A673 (cell line): ENCODE measurements at regions of chr11 and their contacts with region 1.

Region 1: GRCh38 chr11:111601979-111602864 is at the start of gene SIK2:
- DNase-seq: peak; percentile 99
- H3K4me3 ChIP-seq: peak within 1 kb of the TSS; percentile 75
- H3K27ac ChIP-seq: peak within 1 kb of the TSS; percentile 93
- H3K4me1 ChIP-seq: peaks cover 39% of the 10 kb centered on the region
- H3K27me3 ChIP-seq: no peaks in the 10 kb centered on the region
- CTCF ChIP-seq: peak; percentile 91
- total RNA-seq, gene SIK2: 18.7 and 21.5 TPM in 2 replicates

Region 2: DNA sequence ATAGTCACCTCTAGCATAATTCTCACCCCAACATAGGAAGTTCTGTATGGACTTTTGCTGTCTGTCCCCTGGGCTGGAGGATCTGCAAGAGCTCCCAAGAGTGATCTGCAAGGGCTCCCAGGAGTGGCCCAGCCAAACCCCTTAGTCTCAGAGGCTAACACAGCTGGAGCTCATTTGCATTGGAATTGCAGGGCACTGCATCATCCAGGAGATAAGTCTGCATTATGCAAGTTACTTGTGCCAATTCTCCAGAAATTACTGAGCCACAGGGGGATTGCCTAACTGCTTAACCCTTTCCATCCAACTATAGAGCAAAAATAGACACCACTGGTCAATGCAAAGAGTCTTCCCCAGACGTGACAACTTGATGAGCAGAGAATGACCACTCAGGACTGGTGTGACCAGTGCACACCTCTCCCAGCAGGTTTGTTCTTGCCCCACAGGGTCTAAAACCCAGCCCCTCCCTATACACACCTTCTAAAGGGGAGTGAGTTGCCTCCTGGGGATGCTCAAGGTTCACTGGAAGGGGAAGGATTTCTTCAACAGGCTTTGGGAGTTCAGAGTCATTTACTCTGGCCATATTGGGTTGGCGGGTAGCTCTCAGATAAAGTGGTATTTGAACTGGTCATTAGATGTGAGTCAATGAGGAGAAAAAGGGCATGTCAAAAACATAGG is 265.5 kb before region 1 on chr11:
- CTCF ChIA-PET with region 1: no interaction called
- POLR2A ChIA-PET with region 1: no interaction called
- intact Hi-C with region 1: no loop called
- DNase-seq: peak; percentile 99
- H3K4me3 ChIP-seq: no peak overlapping the region
- H3K27ac ChIP-seq: peak overlapping the region; percentile 53
- H3K4me1 ChIP-seq: peaks cover 34% of the 10 kb centered on the region
- H3K27me3 ChIP-seq: no peaks in the 10 kb centered on the region
- CTCF ChIP-seq: no peak

Region 3: GRCh38 chr11:111766093-111766833 is 164.0 kb after region 1 on chr11 and contains the start of gene PPP2R1B:
- CTCF ChIA-PET with region 1: interaction called, 4 read pairs
- POLR2A ChIA-PET with region 1: no interaction called
- intact Hi-C with region 1: loop called (anchors 2 kb)
- DNase-seq: peak; percentile 89
- H3K4me3 ChIP-seq: peak within 1 kb of the TSS; percentile 89
- H3K27ac ChIP-seq: peak within 1 kb of the TSS; percentile 88
- H3K4me1 ChIP-seq: peaks cover 8% of the 10 kb centered on the region
- H3K27me3 ChIP-seq: no peaks in the 10 kb centered on the region
- CTCF ChIP-seq: no peak
- total RNA-seq, gene PPP2R1B: 72.2 and 80.0 TPM in 2 replicates